ENCODE measurements at regions of chr15 and their contacts with region 1.

Region 1: DNA sequence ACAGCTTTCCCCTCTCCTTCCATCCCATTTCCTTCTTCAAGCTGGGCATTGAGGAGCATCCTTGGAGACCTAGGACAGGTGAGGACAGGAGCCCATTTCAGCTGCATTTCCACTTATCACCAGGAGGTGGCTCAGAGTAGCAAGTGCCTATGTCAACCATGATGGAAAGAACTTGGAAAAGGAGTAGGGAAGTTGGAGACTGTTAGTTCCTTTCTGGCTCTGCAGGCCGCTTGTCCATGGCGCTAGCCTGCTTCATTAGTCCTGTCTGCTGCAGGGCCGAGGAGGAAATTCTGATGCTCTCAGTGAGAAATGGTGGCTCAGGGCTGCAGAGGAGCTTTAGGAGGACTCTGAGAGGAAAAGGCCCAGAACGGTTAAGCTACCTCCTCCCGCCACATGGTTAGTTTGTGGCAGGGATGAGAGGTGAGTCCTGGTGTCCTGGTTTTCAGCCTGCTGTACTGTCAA is 7.0 kb upstream of the CD276 start:
- DNase-seq: peak; percentile 60
- H3K4me3 ChIP-seq: no peak overlapping the region
- H3K27ac ChIP-seq: no peak overlapping the region
- H3K4me1 ChIP-seq: no peaks in the 10 kb centered on the region
- H3K27me3 ChIP-seq: peaks cover 22% of the 10 kb centered on the region
- CTCF ChIP-seq: peak; percentile 81
- EP300 ChIP-seq: no peak
- RAD21 ChIP-seq: peak; percentile 73

Region 2: DNA sequence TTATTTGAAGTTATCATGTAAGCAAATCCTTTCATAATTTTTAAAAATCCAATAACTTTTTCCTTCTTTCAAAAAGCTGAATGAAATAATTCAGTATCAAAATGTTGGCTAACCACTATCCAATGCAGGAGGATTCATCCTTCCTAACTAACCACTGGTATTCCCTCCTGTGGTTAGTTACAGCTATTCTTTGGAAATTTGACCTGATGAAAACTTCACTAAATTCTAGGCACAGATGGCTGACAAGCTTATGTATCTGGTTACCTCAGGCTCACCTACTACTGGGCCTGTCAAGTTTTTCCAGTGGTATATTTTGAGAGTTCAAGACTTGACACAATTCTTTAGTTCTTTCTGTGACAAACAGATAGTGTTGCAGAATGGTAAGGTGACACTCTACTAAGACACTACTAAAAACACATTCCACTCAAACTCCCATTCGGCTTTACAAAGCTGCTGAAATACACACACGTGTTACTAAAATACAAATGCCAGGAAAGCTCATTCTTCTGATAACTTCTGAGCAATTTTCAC is 59.8 kb before region 1 on chr15:
- CTCF ChIA-PET with region 1: no interaction called
- POLR2A ChIA-PET with region 1: no interaction called
- DNase-seq: no peak
- H3K4me3 ChIP-seq: no peak overlapping the region
- H3K27ac ChIP-seq: no peak overlapping the region
- H3K4me1 ChIP-seq: peaks cover 0 to 6% of the 10 kb centered on the region in 2 experiments; a peak in 3 of 4 replicates
- H3K27me3 ChIP-seq: no peaks in the 10 kb centered on the region
- CTCF ChIP-seq: no peak
- EP300 ChIP-seq: no peak
- RAD21 ChIP-seq: no peak

Region 3: GRCh38 chr15:73660455-73660854 is 16.7 kb before region 1 on chr15:
- CTCF ChIA-PET with region 1: interaction called, 16 read pairs
- POLR2A ChIA-PET with region 1: no interaction called
- DNase-seq: no peak
- H3K4me3 ChIP-seq: no peak overlapping the region
- H3K27ac ChIP-seq: no peak overlapping the region
- H3K4me1 ChIP-seq: no peaks in the 10 kb centered on the region
- H3K27me3 ChIP-seq: peaks cover 2% of the 10 kb centered on the region; the same call in 1 of the 2 replicates
- CTCF ChIP-seq: no peak
- EP300 ChIP-seq: no peak
- RAD21 ChIP-seq: no peak

Region 4: DNA sequence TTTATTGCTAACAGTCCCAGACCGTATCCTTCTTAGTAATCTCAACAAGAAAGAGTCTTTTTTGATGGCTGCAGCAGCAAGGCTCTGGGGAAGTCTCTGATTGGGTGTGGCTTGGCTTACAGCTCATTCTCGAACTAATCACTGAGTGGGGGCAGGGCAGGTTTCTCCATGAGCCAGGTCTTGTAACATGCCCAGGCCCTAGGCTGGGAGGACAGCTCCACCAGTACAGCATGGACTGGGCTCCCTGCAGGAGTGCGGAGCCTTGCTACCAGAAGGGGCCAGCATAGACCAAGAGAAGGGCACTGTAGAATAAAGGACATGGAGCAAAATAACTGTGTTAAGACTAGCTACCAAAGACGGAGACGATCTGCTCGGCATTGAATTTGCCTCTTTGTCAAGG is 14.2 kb after region 1 on chr15:
- CTCF ChIA-PET with region 1: interaction called, 418 read pairs
- POLR2A ChIA-PET with region 1: no interaction called
- DNase-seq: no peak
- H3K4me3 ChIP-seq: no peak overlapping the region
- H3K27ac ChIP-seq: no peak overlapping the region
- H3K4me1 ChIP-seq: peaks cover 23 to 39% of the 10 kb centered on the region in 2 experiments; a peak in 3 of 4 replicates
- H3K27me3 ChIP-seq: no peaks in the 10 kb centered on the region
- CTCF ChIP-seq: no peak
- EP300 ChIP-seq: no peak
- RAD21 ChIP-seq: peak; percentile 24

Region 5: DNA sequence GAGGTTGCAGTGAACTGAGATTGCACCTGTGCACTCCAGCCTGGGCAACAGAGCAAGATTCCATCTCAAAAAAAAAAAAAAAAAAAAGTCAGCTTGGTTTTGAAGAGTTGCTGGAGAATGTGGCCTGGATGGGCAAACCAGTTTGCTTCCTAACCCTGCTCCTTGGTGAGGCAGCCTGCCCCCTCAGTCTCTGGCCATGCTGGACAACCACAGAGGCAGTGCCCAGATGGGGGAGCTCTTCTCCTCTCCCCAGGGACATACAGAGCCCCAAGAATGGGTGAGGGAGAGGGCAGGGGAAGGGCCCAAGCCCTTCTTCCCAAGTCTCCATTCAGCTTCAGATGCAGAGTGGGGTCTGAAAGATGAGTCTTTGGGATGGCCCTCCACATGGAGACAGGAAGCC is 34.9 kb after region 1 on chr15:
- CTCF ChIA-PET with region 1: interaction called, 10 read pairs
- POLR2A ChIA-PET with region 1: no interaction called
- DNase-seq: no peak
- H3K4me3 ChIP-seq: no peak overlapping the region
- H3K27ac ChIP-seq: no peak overlapping the region
- H3K4me1 ChIP-seq: peaks cover 0 to 4% of the 10 kb centered on the region in 2 experiments; a peak in 1 of 4 replicates
- H3K27me3 ChIP-seq: no peaks in the 10 kb centered on the region
- CTCF ChIP-seq: peak; percentile 30; the same call in 1 of the 2 replicates
- EP300 ChIP-seq: no peak
- RAD21 ChIP-seq: peak; percentile 36; the same call in 1 of the 2 replicates